ENCODE measurements at regions of chr3 and their contacts with region 1.

Region 1: DNA sequence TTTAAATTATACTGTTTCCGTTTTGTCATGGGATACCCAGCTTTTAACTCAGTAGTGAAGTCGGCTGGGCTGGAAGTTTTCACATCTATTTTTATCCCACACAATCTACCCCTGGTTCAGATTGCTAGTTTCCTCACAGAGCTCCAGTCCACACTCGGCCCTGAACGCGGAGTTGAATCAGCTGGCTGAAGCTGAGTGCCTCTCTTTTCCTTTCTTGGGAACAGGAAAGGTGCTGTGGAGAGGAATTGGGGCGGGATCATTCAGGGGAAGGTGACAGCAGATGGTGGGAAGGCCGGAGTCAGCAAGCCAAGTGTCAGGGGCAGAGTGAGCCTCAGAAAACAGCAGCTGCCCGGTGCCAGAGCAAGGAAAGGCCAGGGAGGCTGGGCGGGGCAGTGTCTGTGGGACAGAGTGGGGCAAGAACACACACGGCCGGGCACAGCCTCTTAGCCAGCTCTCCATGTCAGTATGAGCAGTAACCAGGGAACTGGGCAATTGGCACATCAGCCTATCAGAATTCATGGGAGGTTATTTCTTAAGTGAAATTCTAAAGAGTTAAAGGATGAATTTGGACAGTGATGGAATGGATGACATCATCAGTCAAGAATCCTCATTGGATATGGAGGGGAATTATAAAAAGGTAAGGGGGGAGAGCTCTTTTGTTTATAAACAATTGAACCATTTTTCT is 135.7 kb upstream of the IL12A start:
- DNase-seq: peak; percentile 66
- H3K4me3 ChIP-seq: peak overlapping the region; percentile 4 to 39 (median 30)
- H3K27ac ChIP-seq: peak overlapping the region; percentile 91
- H3K4me1 ChIP-seq: peaks cover 52% of the 10 kb centered on the region
- H3K27me3 ChIP-seq: no peaks in the 10 kb centered on the region
- CTCF ChIP-seq: no peak

Region 2: GRCh38 chr3:159839561-159840379 is 13.2 kb before region 1 on chr3:
- CTCF ChIA-PET with region 1: interaction called, 3 read pairs
- dilution Hi-C with region 1: no loop called
- in situ Hi-C with region 1: no loop called
- intact Hi-C with region 1: loop called (anchors 1 kb)
- DNase-seq: peak; percentile 55
- H3K4me3 ChIP-seq: peak within 1 kb of the TSS; percentile 31 to 51 (median 49)
- H3K27ac ChIP-seq: peak within 1 kb of the TSS; percentile 47
- H3K4me1 ChIP-seq: peaks cover 55% of the 10 kb centered on the region
- H3K27me3 ChIP-seq: no peaks in the 10 kb centered on the region
- CTCF ChIP-seq: no peak

Region 3: DNA sequence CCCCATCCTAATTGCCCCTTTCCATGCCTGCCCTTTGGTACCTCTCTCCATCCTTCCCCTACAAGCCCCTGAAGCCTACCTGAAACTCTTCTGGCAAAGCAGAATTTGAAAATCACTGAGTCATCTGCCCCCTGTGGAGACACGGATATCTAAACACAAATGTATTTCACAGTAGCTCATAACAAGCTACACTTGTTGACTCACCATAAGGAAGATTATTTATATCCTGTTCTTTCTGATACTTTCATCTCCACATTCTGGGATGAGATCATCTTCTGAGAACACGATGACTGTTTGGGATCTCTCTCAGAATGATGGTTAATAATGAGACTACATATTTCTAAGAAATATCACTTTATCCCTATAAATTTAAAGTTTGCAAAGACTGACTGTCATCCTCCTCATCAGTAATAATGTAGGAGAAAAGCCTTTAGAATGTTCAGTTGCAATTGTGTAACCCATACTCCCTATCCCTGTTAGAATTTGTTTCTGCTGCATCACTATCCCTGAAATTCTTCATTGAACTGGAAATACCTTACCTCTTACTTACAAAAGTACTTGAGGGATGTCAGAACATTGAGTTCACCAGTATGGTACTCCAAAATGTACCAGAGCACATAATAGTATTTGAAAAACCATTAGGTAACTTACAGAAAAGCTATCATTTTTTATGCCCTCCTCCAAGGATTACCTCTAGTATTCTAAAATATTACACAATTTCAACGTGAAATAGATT is 19.6 kb after region 1 on chr3:
- CTCF ChIA-PET with region 1: no interaction called
- dilution Hi-C with region 1: no loop called
- in situ Hi-C with region 1: no loop called
- intact Hi-C with region 1: loop called (anchors 1 kb)
- DNase-seq: peak; percentile 91
- H3K4me3 ChIP-seq: no peak overlapping the region
- H3K27ac ChIP-seq: peak overlapping the region; percentile 78
- H3K4me1 ChIP-seq: peaks cover 21% of the 10 kb centered on the region
- H3K27me3 ChIP-seq: no peaks in the 10 kb centered on the region
- CTCF ChIP-seq: peak in 1 of 2 donors; percentile 43

Measured in mammary epithelial cell (primary cell).